K562 (cell line): ENCODE measurements at regions of chr3 and their contacts with region 1.

Region 1: DNA sequence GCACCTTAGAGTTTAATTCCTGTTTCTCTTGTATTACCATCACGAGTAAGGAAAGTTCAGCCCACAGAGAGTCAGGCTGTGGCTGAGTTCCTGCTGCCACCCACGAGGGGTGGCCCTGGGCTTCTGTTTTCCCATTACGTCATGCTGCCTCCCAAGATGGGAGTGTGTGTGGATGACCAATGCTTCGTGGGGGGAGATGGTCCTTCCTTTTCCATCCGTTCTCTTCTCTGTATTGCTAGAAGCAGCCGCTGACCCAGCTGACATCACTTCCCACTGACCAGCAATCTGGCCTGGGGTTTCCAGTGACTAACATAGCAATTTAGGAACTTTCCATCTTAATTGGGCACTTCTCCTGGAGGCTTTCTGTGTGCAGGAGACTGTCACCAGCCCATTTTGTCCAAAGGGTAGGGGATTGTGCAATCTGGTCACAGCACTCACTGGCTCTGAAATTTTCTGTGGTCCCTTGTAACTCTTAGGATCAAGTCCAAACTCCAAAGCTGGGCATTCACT is 9.3 kb downstream of the IRAK2 start:
- DNase-seq: peak; percentile 50 to 61 (median 56)
- ATAC-seq: peak; percentile 75
- H3K4me3 ChIP-seq: no peak overlapping the region
- H3K27ac ChIP-seq: no peak overlapping the region; the same call in 2 of the 3 replicates
- H3K4me1 ChIP-seq: peaks cover 9 to 11% of the 10 kb centered on the region in 2 experiments; a peak in 4 of 5 replicates
- H3K27me3 ChIP-seq: no peaks in the 10 kb centered on the region
- CTCF ChIP-seq: no peak
- EP300 ChIP-seq: no peak
- POLR2A ChIP-seq: no peak
- RAD21 ChIP-seq: no peak

Region 2: DNA sequence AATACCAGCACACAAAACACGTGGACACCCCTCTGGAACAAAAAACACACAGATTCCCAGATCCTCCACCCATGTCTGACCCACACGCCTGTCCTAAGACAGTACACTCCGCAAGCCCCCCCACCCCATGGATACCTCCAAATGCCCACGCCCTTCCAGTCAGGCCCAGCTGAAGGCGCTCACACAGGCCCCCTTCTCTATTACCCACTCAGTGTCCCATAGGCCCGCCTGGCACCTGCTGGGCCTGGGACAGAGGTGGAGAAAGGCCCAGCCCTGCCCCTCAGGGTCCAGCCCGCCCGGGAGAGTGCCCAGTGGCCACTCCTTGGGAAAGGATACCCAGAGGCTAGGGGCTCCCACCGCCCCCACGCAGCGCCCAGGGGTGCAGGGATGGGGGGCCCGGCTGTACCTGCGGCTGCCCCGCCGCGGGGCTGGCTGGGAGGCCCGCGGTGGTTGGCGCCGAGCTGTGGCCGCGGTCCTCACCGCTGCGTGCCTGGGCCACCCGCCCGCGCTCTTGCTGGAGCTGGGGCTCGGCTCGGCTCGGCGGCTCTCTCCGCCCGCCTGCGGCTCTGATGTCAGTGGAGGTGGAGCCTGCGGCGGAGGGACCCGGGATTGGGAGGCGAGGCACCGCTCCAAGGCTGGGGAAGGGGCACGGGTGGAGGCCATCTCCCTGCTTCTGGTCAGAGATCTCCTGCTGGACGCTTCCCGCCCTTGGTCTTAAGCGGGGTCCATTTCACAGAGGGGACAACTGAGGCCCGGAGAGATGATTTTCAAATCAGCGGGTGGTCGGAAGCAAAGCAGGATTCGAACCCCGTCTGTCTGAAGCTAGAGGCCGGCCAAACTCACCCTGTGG is 404.3 kb before region 1 on chr3 and contains the start of gene CAMK1:
- CTCF ChIA-PET with region 1: no interaction called
- POLR2A ChIA-PET with region 1: no interaction called
- in situ Hi-C with region 1: no loop called
- intact Hi-C with region 1: no loop called
- DNase-seq: peak; percentile 60 to 76 (median 72)
- ATAC-seq: peak; percentile 89
- H3K4me3 ChIP-seq: peak within 1 kb of the TSS; percentile 37
- H3K27ac ChIP-seq: no peak within 1 kb of the TSS
- H3K4me1 ChIP-seq: peaks cover 0 to 19% of the 10 kb centered on the region in 2 experiments; a peak in 3 of 5 replicates
- H3K27me3 ChIP-seq: no peaks in the 10 kb centered on the region
- CTCF ChIP-seq: no peak
- EP300 ChIP-seq: no peak
- POLR2A ChIP-seq: no peak
- RAD21 ChIP-seq: no peak
- polyA plus RNA-seq, gene CAMK1: 0.23 to 0.39 TPM

Region 3: GRCh38 chr3:10192953-10193691 is 19.1 kb after region 1 on chr3:
- CTCF ChIA-PET with region 1: no interaction called
- POLR2A ChIA-PET with region 1: interaction called, 15 read pairs
- in situ Hi-C with region 1: no loop called
- intact Hi-C with region 1: no loop called
- DNase-seq: peak in 3 of 4 experiments; percentile 48 to 53 (median 48)
- ATAC-seq: peak; percentile 12; the same call in 2 of the 3 replicates
- H3K4me3 ChIP-seq: no peak overlapping the region
- H3K27ac ChIP-seq: peak overlapping the region; percentile 78; the same call in 1 of the 3 replicates
- H3K4me1 ChIP-seq: peaks cover 60 to 61% of the 10 kb centered on the region in 2 experiments
- H3K27me3 ChIP-seq: no peaks in the 10 kb centered on the region
- CTCF ChIP-seq: peak; percentile 30 to 57 (median 39)
- EP300 ChIP-seq: no peak
- POLR2A ChIP-seq: no peak
- RAD21 ChIP-seq: 0 out of 4 replicates have a peak, but pooled peaks of 1 of the 2 experiments have one; percentile 16

Region 4: GRCh38 chr3:10263646-10264363 is 89.8 kb after region 1 on chr3:
- CTCF ChIA-PET with region 1: no interaction called
- POLR2A ChIA-PET with region 1: no interaction called
- in situ Hi-C with region 1: no loop called
- intact Hi-C with region 1: no loop called
- DNase-seq: peak; percentile 74 to 82 (median 77)
- ATAC-seq: peak; percentile 99
- H3K4me3 ChIP-seq: no peak overlapping the region
- H3K27ac ChIP-seq: peak overlapping the region; percentile 40; the same call in 2 of the 3 replicates
- H3K4me1 ChIP-seq: peaks cover 7 to 10% of the 10 kb centered on the region in 2 experiments; a peak in 4 of 5 replicates
- H3K27me3 ChIP-seq: no peaks in the 10 kb centered on the region
- CTCF ChIP-seq: peak; percentile 53 to 79 (median 65)
- EP300 ChIP-seq: no peak
- POLR2A ChIP-seq: no peak
- RAD21 ChIP-seq: peak in 1 of 2 experiments; percentile 51; a peak in 2 of 4 replicates